ENCODE measurements at regions of chr22 and their contacts with region 1.

Region 1: DNA sequence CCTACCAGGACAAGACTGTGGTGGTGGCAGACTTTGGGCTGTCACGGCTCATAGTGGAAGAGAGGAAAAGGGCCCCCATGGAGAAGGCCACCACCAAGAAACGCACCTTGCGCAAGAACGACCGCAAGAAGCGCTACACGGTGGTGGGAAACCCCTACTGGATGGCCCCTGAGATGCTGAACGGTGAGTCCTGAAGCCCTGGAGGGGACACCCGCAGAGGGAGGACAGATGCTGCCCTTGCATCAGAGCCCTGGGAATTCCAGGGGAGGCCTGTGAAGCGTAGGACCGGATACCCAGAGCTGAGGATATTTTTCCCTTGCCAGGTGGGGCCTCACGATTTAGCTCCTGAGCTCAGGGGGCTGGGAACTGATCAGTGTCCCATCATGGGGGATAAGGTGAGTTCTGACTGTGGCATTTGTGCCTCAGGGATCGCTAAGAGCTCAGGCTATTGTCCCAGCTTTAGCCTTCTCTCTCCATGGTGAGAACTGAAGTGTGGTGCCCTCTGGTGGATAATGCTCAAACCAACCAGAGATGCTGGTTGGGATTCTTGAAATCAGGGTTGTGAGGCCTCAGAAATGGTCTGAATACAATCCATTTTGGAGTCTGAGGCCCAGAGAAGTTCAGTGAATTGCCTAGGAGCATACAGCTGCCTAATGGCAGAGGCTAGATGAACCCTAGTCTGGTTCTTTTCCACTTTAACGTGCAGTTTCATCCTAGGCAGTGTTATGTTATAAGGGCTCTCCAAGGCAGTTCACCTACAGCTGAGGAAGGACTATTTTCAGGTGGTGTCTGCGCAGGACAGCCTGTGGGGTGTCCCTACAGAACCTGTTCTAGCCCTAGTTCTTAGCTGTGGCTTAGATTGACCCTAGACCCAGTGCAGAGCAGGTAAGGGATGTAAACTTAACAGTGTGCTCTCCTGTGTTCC is 19.5 kb downstream of the PIK3IP1 start:
- DNase-seq: peak; percentile 70
- ATAC-seq: peak; percentile 84
- H3K4me3 Mint-ChIP-seq: no peak overlapping the region
- H3K27ac Mint-ChIP-seq: no peak overlapping the region
- H3K4me1 Mint-ChIP-seq: peaks cover 51% of the 10 kb centered on the region
- H3K27me3 Mint-ChIP-seq: no peaks in the 10 kb centered on the region

Region 2: GRCh38 chr22:30968924-30969539 is 303.8 kb before region 1 on chr22 and contains the start of gene TUG1:
- CTCF ChIA-PET with region 1: no interaction called
- POLR2A ChIA-PET with region 1: no interaction called
- intact Hi-C with region 1: no loop called
- DNase-seq: peak; percentile 99
- ATAC-seq: peak; percentile 93
- H3K4me3 Mint-ChIP-seq: peak within 1 kb of the TSS; percentile 90
- H3K27ac Mint-ChIP-seq: peak within 1 kb of the TSS; percentile 95
- H3K4me1 Mint-ChIP-seq: peaks cover 51% of the 10 kb centered on the region
- H3K27me3 Mint-ChIP-seq: no peaks in the 10 kb centered on the region
- total RNA-seq, gene TUG1: 46.8 to 56.4 TPM

Region 3: DNA sequence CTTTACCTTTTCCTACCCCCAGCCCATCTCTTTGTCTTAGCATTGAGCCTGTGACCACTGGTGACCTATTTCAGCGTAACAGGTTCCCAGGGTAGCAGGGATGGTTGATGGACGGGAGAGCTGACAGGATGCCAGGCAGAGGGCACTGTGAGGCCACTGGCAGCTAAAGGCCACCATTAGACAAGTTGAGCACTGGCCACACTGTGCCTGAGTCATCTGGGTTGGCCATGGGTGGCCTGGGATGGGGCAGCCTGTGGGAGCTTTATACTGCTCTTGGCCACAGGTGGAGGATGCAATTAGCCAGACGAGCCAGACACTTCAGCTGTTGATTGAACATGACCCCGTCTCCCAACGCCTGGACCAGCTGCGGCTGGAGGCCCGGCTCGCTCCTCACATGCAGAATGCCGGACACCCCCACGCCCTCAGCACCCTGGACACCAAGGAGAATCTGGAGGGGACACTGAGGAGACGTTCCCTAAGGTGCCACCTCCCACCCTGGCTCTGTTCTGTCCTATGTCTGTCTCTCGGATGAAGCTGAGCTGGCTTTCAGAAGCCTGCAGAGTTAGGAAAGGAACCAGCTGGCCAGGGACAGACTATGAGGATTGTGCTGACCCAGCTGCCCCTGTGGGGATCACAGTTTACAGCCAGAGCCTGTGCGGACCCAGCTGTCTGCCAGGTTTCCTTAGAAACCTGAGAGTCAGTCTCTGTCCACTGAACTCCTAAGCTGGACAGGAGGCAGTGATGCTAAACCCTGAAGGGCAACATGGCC is 10.3 kb before region 1 on chr22:
- CTCF ChIA-PET with region 1: interaction called, 13 read pairs
- POLR2A ChIA-PET with region 1: no interaction called
- intact Hi-C with region 1: no loop called
- DNase-seq: no peak
- ATAC-seq: no peak
- H3K4me3 Mint-ChIP-seq: no peak overlapping the region
- H3K27ac Mint-ChIP-seq: no peak overlapping the region
- H3K4me1 Mint-ChIP-seq: no peaks in the 10 kb centered on the region
- H3K27me3 Mint-ChIP-seq: no peaks in the 10 kb centered on the region

Region 4: DNA sequence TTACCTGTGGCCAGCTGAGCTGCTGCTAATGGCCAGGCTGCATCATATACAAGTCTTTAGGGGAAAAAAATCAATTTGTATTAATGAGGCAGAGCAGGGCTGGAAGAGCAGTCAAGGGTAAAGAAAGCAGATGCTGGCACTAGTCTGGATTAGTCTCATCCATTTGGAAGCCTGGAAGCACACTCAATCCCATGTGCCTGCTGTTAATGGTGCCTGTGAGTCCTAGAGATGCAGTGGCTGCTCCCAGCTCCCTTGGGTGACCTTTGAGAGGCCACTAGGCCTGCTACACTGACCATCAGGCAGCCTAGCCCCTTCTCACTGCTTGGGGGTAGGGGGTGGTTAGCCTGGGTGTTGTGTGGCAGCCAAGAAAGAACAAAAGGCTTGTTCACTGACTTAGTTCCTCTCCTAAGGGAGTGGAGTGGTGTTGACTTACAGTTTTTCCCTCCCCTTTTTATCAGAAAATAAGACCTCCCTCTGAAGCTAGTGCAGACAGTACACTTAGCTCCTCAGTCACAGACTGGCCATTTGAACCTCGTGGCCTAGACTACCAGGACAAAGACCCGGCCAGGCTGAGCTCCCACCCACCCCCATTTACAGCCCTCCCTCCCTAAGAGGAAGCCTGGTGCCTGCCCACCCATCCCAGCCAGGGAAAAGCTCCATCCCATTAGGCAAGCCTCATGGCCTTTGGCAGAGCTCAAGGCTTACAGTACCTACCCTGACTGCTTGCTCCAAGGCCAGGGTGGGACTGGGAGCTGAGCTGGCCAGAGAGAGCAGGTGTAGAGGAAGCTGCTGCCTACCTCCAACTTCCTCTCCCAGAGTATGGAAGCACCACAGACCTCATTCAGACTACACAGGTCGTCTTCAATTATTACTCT is 11.7 kb after region 1 on chr22:
- CTCF ChIA-PET with region 1: interaction called, 22 read pairs
- POLR2A ChIA-PET with region 1: interaction called, 38 read pairs
- intact Hi-C with region 1: no loop called
- DNase-seq: no peak
- ATAC-seq: no peak
- H3K4me3 Mint-ChIP-seq: no peak overlapping the region
- H3K27ac Mint-ChIP-seq: peak overlapping the region; percentile 97
- H3K4me1 Mint-ChIP-seq: peaks cover 96% of the 10 kb centered on the region
- H3K27me3 Mint-ChIP-seq: no peaks in the 10 kb centered on the region

Measured in activated CD4-positive, alpha-beta T cell treated with anti-CD3 and anti-CD28 coated beads for 36 hours (primary cell).